ENCODE measurements at regions of chr2 and their contacts with region 1.

Region 1: DNA sequence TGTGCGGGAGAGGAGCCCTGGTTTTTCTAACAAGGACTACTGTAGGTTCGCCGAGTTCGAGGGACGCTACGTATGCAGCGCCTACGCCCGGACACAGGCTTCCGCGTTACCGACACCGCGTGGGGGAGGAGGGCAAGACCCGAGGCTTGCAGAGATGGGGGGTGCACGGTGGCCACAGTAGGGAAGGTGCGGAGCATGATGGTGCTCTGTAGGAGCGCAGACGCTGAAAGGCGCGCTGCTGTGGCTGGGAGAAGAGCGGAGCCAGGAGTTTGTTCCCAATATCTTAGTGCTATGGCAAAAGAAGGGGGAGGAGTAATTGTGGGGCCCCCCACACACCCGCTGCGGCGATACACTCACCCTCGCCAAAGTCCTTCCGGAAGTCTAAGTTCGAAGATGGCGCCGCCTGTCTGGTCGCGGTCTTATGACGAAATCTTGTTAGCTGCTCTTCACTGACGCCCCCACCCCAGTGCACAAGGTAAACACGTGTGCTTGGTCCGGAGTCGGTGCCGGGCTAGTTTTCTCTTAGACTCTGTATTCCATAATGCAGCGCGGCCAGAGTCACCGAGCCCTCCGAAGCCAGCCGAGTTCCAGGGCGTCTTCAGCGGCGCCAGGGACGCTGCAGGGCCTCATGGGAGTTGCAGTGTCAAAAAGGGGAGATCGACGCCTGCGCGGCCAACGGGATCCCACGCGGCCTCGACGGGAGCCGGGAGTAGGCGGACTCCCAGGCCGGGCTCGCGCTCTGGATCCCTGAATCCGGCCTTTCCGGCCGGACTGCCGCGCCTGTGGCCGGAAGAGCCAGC is at the start of gene GTF3C2:
- DNase-seq: peak; percentile 96
- H3K4me3 Mint-ChIP-seq: peak within 1 kb of the TSS; percentile 98
- H3K27ac Mint-ChIP-seq: peak within 1 kb of the TSS; percentile 99
- H3K4me1 Mint-ChIP-seq: peaks cover 51% of the 10 kb centered on the region
- H3K27me3 Mint-ChIP-seq: no peaks in the 10 kb centered on the region
- total RNA-seq, gene GTF3C2: 55.2 to 64.5 TPM

Region 2: GRCh38 chr2:27322766-27323595 is 33.6 kb before region 1 on chr2 and contains the start of gene MPV17:
- CTCF ChIA-PET with region 1: interaction called, 3 read pairs
- POLR2A ChIA-PET with region 1: interaction called, 11 read pairs
- intact Hi-C with region 1: loop called (anchors 1 kb)
- DNase-seq: peak; percentile 94
- H3K4me3 Mint-ChIP-seq: peak within 1 kb of the TSS; percentile 93
- H3K27ac Mint-ChIP-seq: peak within 1 kb of the TSS; percentile 88
- H3K4me1 Mint-ChIP-seq: peaks cover 18% of the 10 kb centered on the region
- H3K27me3 Mint-ChIP-seq: no peaks in the 10 kb centered on the region
- total RNA-seq, gene MPV17: 85.5 to 86.0 TPM

Region 3: DNA sequence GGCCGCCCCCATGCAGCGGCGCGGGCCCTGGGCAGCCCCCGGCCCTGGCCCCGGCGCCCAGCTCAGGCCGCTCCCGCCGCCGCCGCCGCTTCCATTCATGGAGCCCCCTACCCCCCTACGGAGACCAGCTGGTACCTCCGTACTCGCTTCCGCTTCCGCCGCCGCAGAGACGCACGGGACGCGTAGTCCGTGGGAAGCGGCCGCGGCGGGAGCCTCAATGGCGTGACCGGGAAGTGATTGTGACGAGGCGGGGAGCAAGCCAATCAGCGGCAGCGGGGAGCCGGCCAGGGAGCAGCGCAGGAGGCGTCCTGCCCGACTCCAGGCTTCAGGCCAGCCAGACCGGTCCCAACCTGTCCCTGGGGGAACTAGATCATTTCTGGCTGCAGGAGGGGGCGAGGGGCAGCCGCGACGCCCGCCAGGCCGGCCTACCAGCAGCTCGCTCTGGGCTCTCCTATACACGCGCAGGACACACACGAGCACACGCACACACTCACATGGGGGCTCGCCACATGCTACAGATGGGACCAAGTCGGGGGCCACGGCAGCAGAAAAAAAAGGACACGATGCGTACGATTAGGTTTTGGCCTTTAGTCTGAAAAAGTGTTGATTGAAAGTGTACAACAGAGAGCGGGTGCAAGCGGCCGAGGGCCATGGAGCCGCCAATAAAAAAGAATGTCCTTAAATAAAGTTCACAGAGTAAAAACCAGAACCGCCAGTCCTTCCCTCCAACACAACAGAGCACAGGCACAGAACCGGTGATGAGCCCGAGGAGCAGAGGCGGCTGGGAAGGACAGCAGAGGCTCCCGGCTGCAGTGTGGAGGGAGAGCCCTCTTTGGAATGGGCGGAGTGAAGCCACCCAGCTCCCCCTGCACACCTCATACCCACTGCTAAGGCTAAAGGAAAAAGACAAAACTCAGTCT is 24.3 kb after region 1 on chr2 and contains the start of gene ZNF513:
- CTCF ChIA-PET with region 1: no interaction called
- POLR2A ChIA-PET with region 1: interaction called, 3 read pairs
- intact Hi-C with region 1: loop called (anchors 1 kb)
- DNase-seq: peak; percentile 94
- H3K4me3 Mint-ChIP-seq: peak within 1 kb of the TSS; percentile 90
- H3K27ac Mint-ChIP-seq: peak within 1 kb of the TSS; percentile 80
- H3K4me1 Mint-ChIP-seq: peaks cover 22% of the 10 kb centered on the region
- H3K27me3 Mint-ChIP-seq: no peaks in the 10 kb centered on the region
- total RNA-seq, gene ZNF513: 8.6 to 9.7 TPM

Region 4: DNA sequence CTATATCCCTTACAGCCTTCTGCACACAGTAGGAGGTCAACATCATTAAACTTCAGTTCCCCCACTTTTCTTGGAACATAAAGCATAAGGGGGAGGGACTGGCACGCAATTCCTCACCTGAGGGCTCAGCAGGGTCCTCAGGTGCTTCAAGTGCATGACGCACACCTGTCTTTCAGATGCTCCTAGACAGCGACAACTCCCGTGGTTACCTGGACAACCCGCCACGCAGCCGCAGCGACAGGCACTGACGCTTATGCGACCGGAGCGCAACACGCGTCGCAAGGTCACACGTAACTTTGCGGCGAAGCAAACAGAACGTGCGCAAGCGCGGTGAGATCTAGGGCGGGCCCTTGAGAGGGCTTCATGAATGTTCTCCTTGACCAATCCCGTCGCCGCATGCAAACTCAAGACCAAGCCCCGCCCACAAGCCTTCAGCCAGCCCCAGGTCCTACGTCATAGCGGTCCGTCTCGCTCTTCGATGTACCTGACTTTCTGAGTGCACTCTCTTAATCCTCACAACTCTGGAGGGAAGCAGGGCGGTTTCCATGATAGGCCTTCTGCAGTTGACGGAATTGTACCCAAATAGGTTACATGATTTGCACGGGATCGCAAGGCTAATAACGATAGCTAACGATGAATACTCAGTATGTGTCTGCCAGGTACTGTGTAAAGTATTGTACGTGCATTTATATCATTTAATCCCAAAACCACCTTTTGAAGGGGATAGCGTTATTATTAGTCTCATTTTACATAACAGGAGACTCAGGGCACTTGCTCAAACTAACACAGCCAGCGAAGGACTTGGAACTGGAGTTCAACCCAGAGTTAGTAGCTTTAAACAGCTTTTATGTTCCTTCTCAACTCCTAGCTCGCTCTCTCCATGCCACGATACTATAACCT is 133.2 kb after region 1 on chr2 and contains the start of gene IFT172:
- CTCF ChIA-PET with region 1: no interaction called
- POLR2A ChIA-PET with region 1: no interaction called
- intact Hi-C with region 1: loop called (anchors 1 kb)
- DNase-seq: peak; percentile 100
- H3K4me3 Mint-ChIP-seq: peak within 1 kb of the TSS; percentile 88
- H3K27ac Mint-ChIP-seq: peak within 1 kb of the TSS; percentile 76
- H3K4me1 Mint-ChIP-seq: peaks cover 31% of the 10 kb centered on the region
- H3K27me3 Mint-ChIP-seq: peaks cover 14% of the 10 kb centered on the region
- total RNA-seq, gene IFT172: 7.7 to 8.2 TPM

Measured in activated CD4-positive, alpha-beta memory T cell treated with anti-CD3 and anti-CD28 coated beads for 36 hours (primary cell).